ENCODE measurements at regions of chr17 and their contacts with region 1.

Region 1: GRCh38 chr17:56325313-56326000 is 172.2 kb downstream of the ANKFN1 start:
- DNase-seq: no peak
- H3K4me3 ChIP-seq: no peak overlapping the region
- H3K27ac ChIP-seq: no peak overlapping the region
- H3K4me1 ChIP-seq: no peaks in the 10 kb centered on the region
- H3K27me3 ChIP-seq: no peaks in the 10 kb centered on the region
- CTCF ChIP-seq: no peak
- EP300 ChIP-seq: no peak
- POLR2A ChIP-seq: no peak

Region 2: GRCh38 chr17:55845385-55845784 is 480.1 kb before region 1 on chr17:
- in situ Hi-C with region 1: loop called (anchors 25 kb)
- intact Hi-C with region 1: no loop called
- DNase-seq: peak; percentile 33
- H3K4me3 ChIP-seq: peak overlapping the region in 1 of 4 donors; percentile 18
- H3K27ac ChIP-seq: no peak overlapping the region
- H3K4me1 ChIP-seq: peaks cover 0 to 7% (median 3%) of the 10 kb centered on the region in 4 donors
- H3K27me3 ChIP-seq: no peaks in the 10 kb centered on the region
- CTCF ChIP-seq: peak; percentile 41 to 57 (median 51)
- EP300 ChIP-seq: no peak
- POLR2A ChIP-seq: no peak